MCF 10A (cell line): ENCODE measurements at regions of chr20 and their contacts with region 1.

Region 1: DNA sequence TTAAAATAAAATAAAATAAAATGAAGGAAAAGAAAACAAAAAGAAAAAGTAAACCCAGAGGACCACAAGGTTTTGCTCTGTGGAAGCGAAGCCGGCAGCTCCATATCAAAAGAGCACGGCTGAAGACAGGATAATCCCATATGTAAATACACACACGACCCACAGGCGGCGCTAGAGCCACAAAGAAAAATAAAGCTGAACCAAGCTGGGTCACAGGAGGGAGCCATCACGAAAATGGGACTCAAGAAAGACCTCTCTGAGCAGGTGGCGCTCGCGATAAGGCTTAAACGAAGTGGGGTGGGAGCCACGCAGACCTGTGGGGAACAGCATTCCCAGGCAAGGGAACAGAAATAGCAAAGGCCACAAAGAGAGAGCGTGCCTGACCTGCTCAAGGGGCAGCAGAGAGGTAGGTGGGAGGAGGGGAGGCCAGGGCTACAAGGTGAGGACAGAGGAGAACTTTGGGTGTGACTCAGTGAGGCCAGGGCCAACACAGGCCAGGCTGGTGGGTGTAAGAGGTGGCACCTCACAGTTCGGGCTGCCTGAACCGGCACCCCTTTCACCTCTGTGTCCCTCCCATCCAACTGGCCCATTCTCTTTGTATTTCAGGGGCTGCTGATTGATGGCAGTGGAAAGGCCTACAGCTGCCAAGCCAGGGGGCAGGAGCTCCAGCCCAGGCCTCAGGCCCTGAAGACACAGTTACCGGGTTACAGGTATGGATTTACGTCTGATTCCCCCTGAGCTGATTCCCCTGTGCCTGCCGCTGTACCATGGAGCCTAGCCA is 26.0 kb downstream of the PTGIS start:
- DNase-seq: peak; percentile 86
- H3K4me3 Mint-ChIP-seq: no peak overlapping the region
- H3K27ac Mint-ChIP-seq: no peak overlapping the region
- H3K4me1 Mint-ChIP-seq: no peaks in the 10 kb centered on the region
- H3K27me3 Mint-ChIP-seq: no peaks in the 10 kb centered on the region
- CTCF ChIP-seq: peak; percentile 78

Region 2: GRCh38 chr20:48866502-48867335 is 675.2 kb before region 1 on chr20:
- CTCF ChIA-PET with region 1: no interaction called
- POLR2A ChIA-PET with region 1: no interaction called
- intact Hi-C with region 1: no loop called
- DNase-seq: no peak
- H3K4me3 Mint-ChIP-seq: no peak overlapping the region
- H3K27ac Mint-ChIP-seq: no peak overlapping the region
- H3K4me1 Mint-ChIP-seq: no peaks in the 10 kb centered on the region
- H3K27me3 Mint-ChIP-seq: peaks cover 41% of the 10 kb centered on the region
- CTCF ChIP-seq: no peak

Region 3: GRCh38 chr20:49508435-49509199 is 33.3 kb before region 1 on chr20:
- CTCF ChIA-PET with region 1: interaction called, 11 read pairs
- POLR2A ChIA-PET with region 1: interaction called, 3 read pairs
- intact Hi-C with region 1: no loop called
- DNase-seq: peak; percentile 57
- H3K4me3 Mint-ChIP-seq: no peak overlapping the region
- H3K27ac Mint-ChIP-seq: no peak overlapping the region
- H3K4me1 Mint-ChIP-seq: peaks cover 16% of the 10 kb centered on the region
- H3K27me3 Mint-ChIP-seq: no peaks in the 10 kb centered on the region
- CTCF ChIP-seq: peak; percentile 69

Region 4: DNA sequence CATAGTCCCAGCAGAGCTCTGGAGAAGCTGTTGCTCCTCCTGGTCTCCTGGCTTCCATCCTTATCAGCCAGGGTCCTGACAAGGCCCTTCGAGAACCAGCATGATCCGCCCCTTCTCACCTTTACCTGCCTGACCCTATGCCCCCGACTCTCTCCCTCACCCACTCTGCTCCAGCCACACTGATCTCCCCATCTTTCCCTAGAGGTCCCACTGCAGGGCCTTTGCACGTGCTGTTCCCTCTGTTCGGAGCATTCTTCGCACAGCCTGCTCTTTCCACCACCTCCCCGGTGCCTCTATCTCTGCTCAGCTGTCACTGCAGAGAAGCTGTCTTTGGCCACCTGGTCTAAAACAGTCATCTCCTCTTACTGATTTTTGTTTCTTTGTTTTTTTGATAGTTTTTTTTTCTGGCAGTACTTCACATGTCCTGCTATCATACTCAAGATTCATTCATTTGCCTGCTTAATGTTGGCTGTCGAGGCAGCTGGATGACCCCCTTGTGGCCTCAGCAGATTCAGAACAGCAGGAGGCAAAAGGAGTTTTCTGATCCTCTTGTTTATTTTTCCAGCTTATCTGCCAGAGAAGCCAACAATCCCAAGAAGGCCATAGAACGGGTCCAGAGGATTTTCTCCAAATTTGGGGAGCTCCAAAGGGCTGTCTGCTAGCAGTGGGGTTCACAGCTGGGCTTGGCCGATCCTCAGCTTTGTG is 27.6 kb after region 1 on chr20:
- CTCF ChIA-PET with region 1: interaction called, 14 read pairs
- POLR2A ChIA-PET with region 1: no interaction called
- intact Hi-C with region 1: no loop called
- DNase-seq: no peak
- H3K4me3 Mint-ChIP-seq: no peak overlapping the region
- H3K27ac Mint-ChIP-seq: no peak overlapping the region
- H3K4me1 Mint-ChIP-seq: peaks cover 5% of the 10 kb centered on the region
- H3K27me3 Mint-ChIP-seq: peaks cover 59% of the 10 kb centered on the region
- CTCF ChIP-seq: no peak

Region 5: DNA sequence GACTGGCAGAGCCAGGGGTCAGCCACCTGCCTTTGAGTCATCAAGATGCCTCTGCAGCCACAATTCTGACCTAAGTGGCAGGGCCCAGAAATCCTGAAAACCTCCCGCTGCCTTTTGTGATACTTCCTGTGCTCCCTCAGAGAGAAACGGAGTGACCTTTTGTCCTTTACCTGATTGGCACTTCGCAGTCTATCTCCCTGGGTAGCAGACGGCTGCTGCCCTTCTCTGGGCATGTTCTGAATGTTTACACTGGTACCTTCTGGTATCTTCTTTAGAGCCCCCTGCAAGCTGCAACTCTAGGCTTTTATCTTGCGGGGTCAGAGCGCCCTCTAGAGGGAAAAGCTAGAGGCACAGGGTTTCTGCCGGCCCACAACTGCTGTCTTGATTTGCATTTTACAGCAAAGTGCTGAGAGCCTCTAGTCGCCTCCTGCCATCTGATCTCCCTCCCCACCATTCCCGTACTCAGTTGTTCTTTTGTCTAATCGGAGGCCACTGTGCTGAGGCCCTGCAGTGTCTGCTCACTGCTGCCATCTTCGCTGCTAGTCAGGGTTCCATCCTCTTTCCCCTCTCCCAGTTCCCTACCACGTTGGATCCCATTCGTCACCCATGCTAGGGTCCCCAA is 346.5 kb after region 1 on chr20:
- CTCF ChIA-PET with region 1: interaction called, 8 read pairs
- POLR2A ChIA-PET with region 1: no interaction called
- intact Hi-C with region 1: loop called (anchors 1 kb)
- DNase-seq: peak; percentile 54
- H3K4me3 Mint-ChIP-seq: no peak overlapping the region
- H3K27ac Mint-ChIP-seq: no peak overlapping the region
- H3K4me1 Mint-ChIP-seq: peaks cover 7% of the 10 kb centered on the region
- H3K27me3 Mint-ChIP-seq: no peaks in the 10 kb centered on the region
- CTCF ChIP-seq: peak; percentile 92